CD8-positive, alpha-beta T cell (primary cell): ENCODE measurements at regions of chr4 and their contacts with region 1.

Region 1: DNA sequence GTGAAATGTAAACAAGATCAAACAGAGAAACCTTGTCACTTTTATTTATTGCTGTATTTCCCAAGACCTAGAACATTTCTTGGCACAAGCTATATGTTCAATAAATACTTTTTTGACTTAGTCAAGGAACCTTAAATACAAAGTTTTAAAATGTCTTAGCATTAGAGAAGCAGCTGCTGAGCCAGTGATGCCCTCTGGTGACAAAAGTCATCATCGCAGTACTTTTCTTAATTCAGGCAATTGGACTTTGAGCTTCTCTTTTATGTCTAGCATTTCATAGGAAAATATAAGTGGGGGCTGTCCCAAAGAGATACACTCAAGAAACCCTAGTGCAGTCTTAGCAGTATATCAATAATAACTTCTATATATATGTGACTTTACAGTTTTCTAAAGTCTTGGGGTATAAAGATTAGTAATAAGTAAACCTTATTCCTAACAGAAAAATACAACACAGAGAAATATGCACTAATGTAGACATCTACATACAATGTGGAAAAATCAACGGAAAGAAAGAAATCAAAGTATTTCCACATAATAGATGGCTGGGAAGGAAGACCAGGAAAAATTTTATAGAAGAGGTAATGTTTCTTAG is 118.4 kb downstream of the DTHD1 start:
- DNase-seq: peak; percentile 16 to 75 (median 56)
- ATAC-seq: peak; percentile 76
- H3K4me3 ChIP-seq: no peak overlapping the region
- H3K4me3 Mint-ChIP-seq: no peak overlapping the region
- H3K27ac ChIP-seq: no peak overlapping the region
- H3K27ac Mint-ChIP-seq: no peak overlapping the region
- H3K4me1 ChIP-seq: no peaks in the 10 kb centered on the region
- H3K4me1 Mint-ChIP-seq: no peaks in the 10 kb centered on the region
- H3K27me3 ChIP-seq: no peaks in the 10 kb centered on the region
- H3K27me3 Mint-ChIP-seq: peaks cover 5% of the 10 kb centered on the region
- CTCF ChIP-seq: peak; percentile 77

Region 2: GRCh38 chr4:36244257-36245079 is 155.4 kb before region 1 on chr4 and contains the start of gene ARAP2:
- CTCF ChIA-PET with region 1: interaction called, 13 read pairs
- POLR2A ChIA-PET with region 1: interaction called, 3 read pairs
- intact Hi-C with region 1: loop called in 1 of 2 experiments (anchors 2 kb)
- DNase-seq: peak; percentile 45 to 91 (median 79)
- ATAC-seq: peak; percentile 76
- H3K4me3 ChIP-seq: peak within 1 kb of the TSS; percentile 87 to 93
- H3K4me3 Mint-ChIP-seq: peak within 1 kb of the TSS; percentile 91
- H3K27ac ChIP-seq: peak within 1 kb of the TSS; percentile 86 to 93
- H3K27ac Mint-ChIP-seq: peak within 1 kb of the TSS; percentile 96
- H3K4me1 ChIP-seq: peaks cover 20% of the 10 kb centered on the region
- H3K4me1 Mint-ChIP-seq: peaks cover 38% of the 10 kb centered on the region
- H3K27me3 ChIP-seq: no peaks in the 10 kb centered on the region
- H3K27me3 Mint-ChIP-seq: no peaks in the 10 kb centered on the region
- CTCF ChIP-seq: no peak
- total RNA-seq, gene ARAP2: 91.0 to 95.8 TPM

Region 3: DNA sequence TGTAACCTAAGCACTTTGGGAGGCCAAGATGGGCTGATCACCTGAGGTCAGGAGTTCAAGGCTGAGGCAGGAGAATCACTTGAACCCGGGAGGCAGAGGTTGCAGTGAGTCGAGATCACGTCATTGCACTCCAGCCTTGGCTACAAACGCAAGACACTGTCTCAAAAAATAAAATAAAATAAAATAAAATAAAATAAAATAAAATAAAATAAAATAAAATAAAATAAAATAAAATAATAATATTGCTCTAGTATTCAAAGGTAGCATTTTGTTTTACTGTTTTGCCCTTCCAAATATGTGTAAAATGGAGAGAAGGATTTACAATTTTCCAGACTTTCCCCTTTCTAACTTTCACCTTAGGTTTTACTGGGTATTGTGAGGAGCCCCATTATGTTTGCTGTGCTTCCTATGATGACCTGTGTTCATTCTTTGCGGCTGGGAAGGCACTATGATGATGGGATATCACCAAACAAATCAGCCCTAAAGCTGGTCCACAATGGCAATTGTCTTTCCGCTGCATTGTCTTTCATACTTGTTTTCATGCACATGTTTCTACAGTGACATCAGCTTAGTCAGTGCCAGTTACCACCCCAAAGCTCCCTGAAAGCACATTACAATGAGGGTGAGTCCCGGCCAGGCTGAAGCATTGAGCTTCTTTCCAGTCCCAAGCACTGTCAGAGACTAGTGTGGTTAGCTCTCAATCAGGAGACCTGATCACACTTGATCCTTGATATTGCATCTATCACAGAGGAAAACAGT is 67.7 kb before region 1 on chr4:
- CTCF ChIA-PET with region 1: interaction called, 12 read pairs
- POLR2A ChIA-PET with region 1: no interaction called
- intact Hi-C with region 1: no loop called
- DNase-seq: no peak
- ATAC-seq: no peak
- H3K4me3 ChIP-seq: no peak overlapping the region
- H3K4me3 Mint-ChIP-seq: no peak overlapping the region
- H3K27ac ChIP-seq: no peak overlapping the region
- H3K27ac Mint-ChIP-seq: no peak overlapping the region
- H3K4me1 ChIP-seq: no peaks in the 10 kb centered on the region
- H3K4me1 Mint-ChIP-seq: peaks cover 16% of the 10 kb centered on the region
- H3K27me3 ChIP-seq: no peaks in the 10 kb centered on the region
- H3K27me3 Mint-ChIP-seq: no peaks in the 10 kb centered on the region
- CTCF ChIP-seq: no peak

Region 4: GRCh38 chr4:36351082-36351666 is 48.7 kb before region 1 on chr4:
- CTCF ChIA-PET with region 1: interaction called, 118 read pairs
- POLR2A ChIA-PET with region 1: interaction called, 6 read pairs
- intact Hi-C with region 1: loop called (anchors 1 kb)
- DNase-seq: peak; percentile 57 to 83 (median 77)
- ATAC-seq: peak; percentile 87
- H3K4me3 ChIP-seq: no peak overlapping the region
- H3K4me3 Mint-ChIP-seq: no peak overlapping the region
- H3K27ac ChIP-seq: no peak overlapping the region
- H3K27ac Mint-ChIP-seq: no peak overlapping the region
- H3K4me1 ChIP-seq: no peaks in the 10 kb centered on the region
- H3K4me1 Mint-ChIP-seq: peaks cover 7% of the 10 kb centered on the region
- H3K27me3 ChIP-seq: no peaks in the 10 kb centered on the region
- H3K27me3 Mint-ChIP-seq: no peaks in the 10 kb centered on the region
- CTCF ChIP-seq: peak; percentile 97

Region 5: GRCh38 chr4:36374836-36375401 is 24.9 kb before region 1 on chr4:
- CTCF ChIA-PET with region 1: interaction called, 17 read pairs
- POLR2A ChIA-PET with region 1: no interaction called
- intact Hi-C with region 1: no loop called
- DNase-seq: no peak
- ATAC-seq: no peak
- H3K4me3 ChIP-seq: no peak overlapping the region
- H3K4me3 Mint-ChIP-seq: no peak overlapping the region
- H3K27ac ChIP-seq: no peak overlapping the region
- H3K27ac Mint-ChIP-seq: no peak overlapping the region
- H3K4me1 ChIP-seq: no peaks in the 10 kb centered on the region
- H3K4me1 Mint-ChIP-seq: no peaks in the 10 kb centered on the region
- H3K27me3 ChIP-seq: no peaks in the 10 kb centered on the region
- H3K27me3 Mint-ChIP-seq: no peaks in the 10 kb centered on the region
- CTCF ChIP-seq: no peak

Region 6: DNA sequence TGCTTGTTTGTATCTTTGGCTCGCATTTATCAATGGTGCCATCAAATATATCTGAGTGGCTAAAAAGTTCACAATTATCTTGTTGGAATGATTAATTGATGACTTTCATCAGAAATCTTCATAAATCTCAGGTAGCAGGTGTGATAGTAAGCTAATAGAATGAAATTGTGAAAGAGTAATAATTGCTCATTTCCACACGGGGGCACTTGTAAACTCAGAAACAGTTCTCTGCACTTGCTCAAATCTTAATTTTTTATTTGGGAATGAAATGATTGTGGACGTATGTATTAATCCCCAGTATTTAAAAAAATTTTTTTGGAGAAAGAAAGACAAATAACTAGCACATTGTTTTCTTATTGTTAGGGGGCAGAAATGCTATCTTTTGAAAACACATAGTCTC is 14.4 kb after region 1 on chr4:
- CTCF ChIA-PET with region 1: interaction called, 20 read pairs
- POLR2A ChIA-PET with region 1: no interaction called
- intact Hi-C with region 1: no loop called
- DNase-seq: no peak
- ATAC-seq: no peak
- H3K4me3 ChIP-seq: no peak overlapping the region
- H3K4me3 Mint-ChIP-seq: no peak overlapping the region
- H3K27ac ChIP-seq: no peak overlapping the region
- H3K27ac Mint-ChIP-seq: no peak overlapping the region
- H3K4me1 ChIP-seq: no peaks in the 10 kb centered on the region
- H3K4me1 Mint-ChIP-seq: no peaks in the 10 kb centered on the region
- H3K27me3 ChIP-seq: peaks cover 8 to 11% of the 10 kb centered on the region in 2 experiments
- H3K27me3 Mint-ChIP-seq: peaks cover 31% of the 10 kb centered on the region
- CTCF ChIP-seq: no peak